ENCODE measurements at regions of chr10 and their contacts with region 1.

Region 1: DNA sequence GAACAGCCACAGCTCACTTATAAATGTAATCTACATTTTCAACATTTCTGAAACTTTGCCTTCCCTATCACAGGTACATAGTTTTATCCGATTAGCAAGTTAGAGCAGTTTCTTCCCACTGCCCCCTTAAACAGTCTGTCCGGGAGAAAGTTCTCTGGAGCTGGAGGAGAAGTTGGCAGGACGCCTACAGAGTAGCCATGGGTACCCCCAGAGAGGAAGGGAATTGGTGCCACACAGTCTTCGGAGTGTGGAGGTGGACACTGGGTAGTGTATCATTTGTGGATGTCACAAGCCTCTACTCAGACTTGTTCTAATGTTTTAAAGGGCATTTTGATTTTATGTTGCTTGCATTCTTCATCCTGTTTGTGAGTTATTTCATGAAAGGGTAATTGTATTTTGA is 39.0 kb downstream of the TAF3 start:
- DNase-seq: no peak
- ATAC-seq: no peak
- H3K4me3 ChIP-seq: no peak overlapping the region
- H3K27ac ChIP-seq: no peak overlapping the region; the same call in 1 of the 2 replicates
- H3K4me1 ChIP-seq: no peaks in the 10 kb centered on the region
- H3K27me3 ChIP-seq: no peaks in the 10 kb centered on the region
- CTCF ChIP-seq: no peak

Region 2: DNA sequence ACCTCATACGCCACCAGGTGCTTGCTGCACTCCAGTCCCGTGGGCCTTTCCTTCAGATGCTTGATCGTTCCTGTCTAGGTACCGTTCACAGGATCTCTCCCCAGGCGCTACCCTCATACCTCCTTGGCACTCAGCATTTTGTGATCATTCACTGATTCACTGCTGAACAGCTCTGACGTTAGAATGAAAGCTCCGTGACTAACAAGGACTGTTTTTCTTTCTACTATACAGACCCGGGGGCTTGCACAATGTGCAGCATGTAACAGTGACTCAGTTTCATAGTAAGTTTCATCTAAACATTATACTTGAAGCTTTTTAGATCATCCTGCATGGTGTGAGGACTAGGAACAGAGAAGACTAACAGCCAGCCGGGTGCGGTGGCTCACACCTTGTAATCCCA is 90.1 kb before region 1 on chr10:
- CTCF ChIA-PET with region 1: no interaction called
- POLR2A ChIA-PET with region 1: no interaction called
- in situ Hi-C with region 1: no loop called
- intact Hi-C with region 1: no loop called
- DNase-seq: no peak
- ATAC-seq: no peak
- H3K4me3 ChIP-seq: no peak overlapping the region
- H3K27ac ChIP-seq: no peak overlapping the region
- H3K4me1 ChIP-seq: no peaks in the 10 kb centered on the region
- H3K27me3 ChIP-seq: no peaks in the 10 kb centered on the region
- CTCF ChIP-seq: no peak

Region 3: GRCh38 chr10:8075301-8076261 is 218.3 kb after region 1 on chr10:
- CTCF ChIA-PET with region 1: interaction called, 10 read pairs
- POLR2A ChIA-PET with region 1: no interaction called
- in situ Hi-C with region 1: no loop called
- intact Hi-C with region 1: no loop called
- DNase-seq: no peak
- ATAC-seq: no peak; the same call in 1 of the 2 replicates
- H3K4me3 ChIP-seq: no peak overlapping the region
- H3K27ac ChIP-seq: no peak overlapping the region; the same call in 1 of the 2 replicates
- H3K4me1 ChIP-seq: peaks cover 6% of the 10 kb centered on the region
- H3K27me3 ChIP-seq: no peaks in the 10 kb centered on the region
- CTCF ChIP-seq: no peak

Region 4: DNA sequence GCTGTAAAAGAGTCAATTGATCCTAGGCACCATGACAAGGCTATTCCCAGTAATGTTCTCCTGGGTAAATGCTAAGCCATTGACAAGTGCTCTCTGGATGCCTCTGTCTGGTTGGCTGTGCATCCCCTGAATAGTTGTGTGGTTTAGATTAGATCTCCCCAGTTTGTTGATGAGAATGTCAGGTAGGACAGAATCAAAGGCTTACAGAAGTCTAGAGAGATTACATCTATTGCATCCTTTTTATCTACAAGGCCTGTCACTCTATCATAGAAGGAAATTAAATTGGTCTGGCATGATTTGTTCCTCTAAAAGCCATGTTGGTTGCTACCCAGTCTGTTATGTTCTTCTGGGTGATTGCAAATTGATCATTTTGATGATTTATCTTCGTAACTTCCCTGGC is 745.6 kb after region 1 on chr10:
- CTCF ChIA-PET with region 1: no interaction called
- POLR2A ChIA-PET with region 1: interaction called, 15 read pairs
- in situ Hi-C with region 1: no loop called
- intact Hi-C with region 1: no loop called
- DNase-seq: no peak
- ATAC-seq: no peak
- H3K4me3 ChIP-seq: no peak overlapping the region
- H3K27ac ChIP-seq: no peak overlapping the region
- H3K4me1 ChIP-seq: no peaks in the 10 kb centered on the region
- H3K27me3 ChIP-seq: no peaks in the 10 kb centered on the region
- CTCF ChIP-seq: no peak